ENCODE measurements at regions of chr10 and their contacts with region 1.

Region 1: DNA sequence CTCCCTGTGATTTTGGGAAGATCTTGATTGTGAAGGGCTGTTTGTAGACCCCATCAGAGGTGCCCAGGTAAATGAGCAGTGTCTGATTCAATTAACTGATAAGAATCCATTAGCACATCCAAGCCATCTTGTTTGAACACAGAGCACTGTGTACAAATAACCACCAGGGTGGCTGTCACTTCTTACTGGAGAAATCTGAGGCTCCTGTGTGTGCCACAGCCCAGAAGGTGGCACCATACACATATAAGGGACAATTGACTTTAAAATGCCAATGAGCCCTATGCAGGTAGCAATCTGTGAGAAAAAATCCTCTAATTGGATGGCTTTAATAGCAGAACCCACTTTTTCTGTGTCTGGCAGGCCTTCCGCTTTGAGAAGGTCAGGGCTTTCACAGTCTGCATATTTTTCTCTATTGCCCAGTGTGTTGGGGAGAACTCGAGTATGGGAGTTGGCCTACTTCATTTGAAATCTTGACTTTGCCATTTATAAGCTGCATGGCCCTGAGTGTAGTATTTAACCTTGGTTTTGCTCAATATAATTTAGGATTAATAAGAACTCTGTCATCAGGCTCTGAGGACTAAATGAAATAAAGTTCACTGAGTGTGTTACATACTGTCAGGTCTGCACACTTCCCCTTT is 517.4 kb downstream of the CCSER2 start:
- DNase-seq: no peak

Region 2: GRCh38 chr10:84695902-84696301 is 149.8 kb before region 1 on chr10:
- intact Hi-C with region 1: no loop called
- DNase-seq: no peak

Region 3: GRCh38 chr10:84783386-84783785 is 62.4 kb before region 1 on chr10:
- intact Hi-C with region 1: loop called (anchors 2 kb)
- DNase-seq: no peak

Region 4: DNA sequence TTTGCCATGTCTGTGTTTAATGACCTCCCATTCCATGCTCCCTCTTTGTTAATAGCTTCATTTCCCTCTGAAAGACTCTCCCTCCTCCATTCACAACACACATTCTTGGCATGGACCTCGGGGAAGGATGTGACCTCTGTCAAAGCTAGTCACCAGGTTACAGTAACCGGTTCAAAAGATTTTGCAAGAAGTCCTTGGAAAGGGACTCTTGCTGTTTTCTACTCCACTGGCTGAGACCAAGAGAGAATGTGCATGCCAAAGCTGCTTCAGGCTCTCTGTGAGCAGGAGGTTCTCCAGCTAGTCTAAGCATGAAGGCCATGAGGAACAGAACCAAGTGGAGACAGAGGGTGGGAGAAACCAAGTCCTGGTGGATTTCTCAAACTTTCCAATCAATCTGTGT is 215.2 kb after region 1 on chr10:
- intact Hi-C with region 1: no loop called
- DNase-seq: no peak

Region 5: GRCh38 chr10:85510682-85511081 is 664.9 kb after region 1 on chr10:
- intact Hi-C with region 1: loop called (anchors 10 kb)
- DNase-seq: no peak

Measured in cardiac septum (tissue), 1 donor.